OCI-LY7 (cell line): ENCODE measurements at regions of chr17 and their contacts with region 1.

Region 1: DNA sequence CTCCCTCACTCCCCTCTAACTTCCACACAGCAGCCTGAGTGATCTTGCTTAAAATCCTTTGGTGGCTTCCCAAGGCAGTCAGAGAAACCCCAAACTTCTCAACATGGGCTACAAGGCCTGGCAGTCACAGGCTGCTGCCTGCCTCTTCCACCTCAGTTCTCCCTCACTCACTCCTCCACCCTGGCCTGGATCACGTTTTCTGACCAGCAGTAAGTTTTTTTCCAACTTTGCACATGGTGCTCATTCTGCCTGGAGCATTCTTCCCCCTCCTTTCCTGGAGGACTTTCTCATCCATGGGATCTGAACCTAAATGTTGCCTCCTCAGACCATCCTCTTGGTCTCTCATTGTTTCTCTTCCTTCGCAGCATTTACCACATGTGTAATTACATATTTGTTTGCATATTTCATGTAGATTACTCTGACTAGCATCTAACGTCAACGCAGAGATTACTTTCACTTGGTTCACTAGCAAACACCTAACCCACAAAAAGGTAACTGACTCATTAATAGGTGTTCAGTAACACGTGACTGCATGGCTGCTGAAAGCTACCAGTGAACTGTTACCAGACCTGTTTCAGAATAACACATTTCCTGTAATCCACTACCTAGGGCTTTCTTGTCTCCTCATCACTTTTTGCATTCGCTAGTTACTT is 17.1 kb downstream of the GNA13 start:
- DNase-seq: peak; percentile 72
- H3K4me3 ChIP-seq: peak overlapping the region; percentile 57
- H3K27ac ChIP-seq: peak overlapping the region; percentile 89
- H3K4me1 ChIP-seq: peaks cover 100% of the 10 kb centered on the region
- CTCF ChIP-seq: no peak

Region 2: GRCh38 chr17:64975329-64976087 is 64.0 kb before region 1 on chr17:
- CTCF ChIA-PET with region 1: interaction called, 3 read pairs
- POLR2A ChIA-PET with region 1: interaction called, 11 read pairs
- intact Hi-C with region 1: no loop called
- DNase-seq: peak; percentile 97
- H3K4me3 ChIP-seq: peak overlapping the region; percentile 77
- H3K27ac ChIP-seq: peak overlapping the region; percentile 99
- H3K4me1 ChIP-seq: peaks cover 87% of the 10 kb centered on the region
- CTCF ChIP-seq: no peak

Region 3: GRCh38 chr17:65008882-65009281 is 30.6 kb before region 1 on chr17:
- CTCF ChIA-PET with region 1: no interaction called
- POLR2A ChIA-PET with region 1: interaction called, 11 read pairs
- intact Hi-C with region 1: no loop called
- DNase-seq: no peak
- H3K4me3 ChIP-seq: no peak overlapping the region
- H3K27ac ChIP-seq: peak overlapping the region; percentile 37
- H3K4me1 ChIP-seq: peaks cover 85% of the 10 kb centered on the region
- CTCF ChIP-seq: no peak

Region 4: GRCh38 chr17:65020313-65020712 is 19.1 kb before region 1 on chr17:
- CTCF ChIA-PET with region 1: no interaction called
- POLR2A ChIA-PET with region 1: interaction called, 20 read pairs
- intact Hi-C with region 1: no loop called
- DNase-seq: no peak
- H3K4me3 ChIP-seq: no peak overlapping the region
- H3K27ac ChIP-seq: peak overlapping the region; percentile 45
- H3K4me1 ChIP-seq: peaks cover 72% of the 10 kb centered on the region
- CTCF ChIP-seq: no peak

Region 5: GRCh38 chr17:65027305-65027704 is 12.2 kb before region 1 on chr17:
- CTCF ChIA-PET with region 1: no interaction called
- POLR2A ChIA-PET with region 1: interaction called, 15 read pairs
- intact Hi-C with region 1: no loop called
- DNase-seq: no peak
- H3K4me3 ChIP-seq: no peak overlapping the region
- H3K27ac ChIP-seq: peak overlapping the region; percentile 18
- H3K4me1 ChIP-seq: peaks cover 88% of the 10 kb centered on the region
- CTCF ChIP-seq: peak; percentile 69